Heart left ventricle (tissue), 16 donors: ENCODE measurements at regions of chr15 and their contacts with region 1.

Region 1: GRCh38 chr15:88498996-88499395 is 31.5 kb downstream of the MRPS11 start:
- DNase-seq: peak in 2 of 5 donors; percentile 34 to 57
- ATAC-seq: peak; percentile 47 to 79 (median 61)
- H3K4me3 ChIP-seq: no peak overlapping the region
- H3K27ac ChIP-seq: peak overlapping the region in 10 of 12 donors; percentile 3 to 83 (median 48)
- H3K4me1 ChIP-seq: peaks cover 0 to 39% (median 9%) of the 10 kb centered on the region in 12 donors
- H3K27me3 ChIP-seq: no peaks in the 10 kb centered on the region
- CTCF ChIP-seq: no peak
- POLR2A ChIP-seq: no peak

Region 2: DNA sequence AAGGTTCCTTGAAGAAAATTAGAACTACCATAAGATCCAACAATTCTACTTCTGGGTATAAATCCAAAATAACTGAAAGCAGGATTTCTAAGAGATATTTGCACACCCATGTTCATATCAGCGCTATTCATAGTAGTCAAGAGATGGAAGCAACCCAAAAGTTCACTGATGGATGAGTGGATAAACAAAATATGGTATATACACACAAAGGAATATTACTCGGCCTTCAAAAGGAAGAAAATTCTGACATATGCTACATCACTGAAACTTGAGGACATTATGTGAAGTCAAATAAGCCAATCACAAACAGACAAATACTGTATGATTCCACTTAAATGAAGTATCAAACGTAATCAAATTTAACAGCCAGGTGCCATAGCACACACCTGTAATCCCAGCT is 34.4 kb after region 1 on chr15:
- intact Hi-C with region 1: loop called in 1 of 10 experiments (anchors 5 kb)
- DNase-seq: no peak
- ATAC-seq: no peak
- H3K4me3 ChIP-seq: no peak overlapping the region
- H3K27ac ChIP-seq: no peak overlapping the region
- H3K4me1 ChIP-seq: peaks cover 0 to 19% (median 0%) of the 10 kb centered on the region in 12 donors
- H3K27me3 ChIP-seq: no peaks in the 10 kb centered on the region
- CTCF ChIP-seq: no peak
- POLR2A ChIP-seq: no peak

Region 3: DNA sequence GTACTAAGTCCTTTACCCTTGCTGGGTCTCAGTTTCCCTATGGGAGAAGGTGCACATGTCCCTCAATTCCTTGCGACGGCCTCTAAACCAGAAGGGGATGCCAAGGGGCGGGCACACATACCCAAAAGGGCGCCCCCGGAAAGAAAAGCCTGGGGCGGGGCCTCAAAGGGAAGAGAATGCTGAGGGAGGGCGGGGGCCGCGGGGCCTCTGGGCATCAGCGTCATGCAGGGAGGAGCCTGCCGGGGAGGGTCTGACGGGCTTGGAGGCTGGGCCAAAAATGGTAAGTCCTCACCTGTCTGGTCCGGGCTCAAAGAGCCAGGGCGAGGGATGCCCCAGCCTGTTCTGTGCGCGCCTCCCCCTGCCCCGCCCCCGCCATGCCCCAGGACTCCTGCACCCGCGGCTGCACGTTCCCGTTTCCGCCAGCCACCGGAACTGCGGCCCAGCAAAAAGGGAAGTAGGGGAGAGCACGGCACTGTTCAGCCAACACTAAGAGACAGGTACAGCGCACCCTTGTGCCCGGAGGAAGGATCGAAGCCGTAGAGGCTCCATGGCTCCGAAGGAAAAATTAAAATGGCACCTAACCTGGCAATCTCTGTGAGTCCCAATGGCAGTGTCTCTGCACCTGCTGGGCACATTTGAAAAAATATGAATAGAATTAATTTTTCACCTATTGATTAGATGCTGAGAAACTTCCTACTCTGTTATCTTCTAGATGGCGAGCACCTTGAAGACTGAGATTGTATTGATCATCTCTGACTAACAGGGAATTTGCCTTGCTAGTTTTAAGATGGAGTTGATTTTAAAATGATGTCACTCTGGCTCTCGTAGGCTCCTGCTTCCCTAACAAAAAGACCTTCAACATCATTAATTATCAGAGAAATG is 47.5 kb after region 1 on chr15 and contains the start of gene DET1:
- intact Hi-C with region 1: loop called in 1 of 10 experiments (anchors 2 kb)
- DNase-seq: peak; percentile 95 to 97 (median 96)
- ATAC-seq: peak; percentile 98 to 99 (median 99)
- H3K4me3 ChIP-seq: peak within 1 kb of the TSS; percentile 37 to 83 (median 78)
- H3K27ac ChIP-seq: peak within 1 kb of the TSS; percentile 82 to 97 (median 92)
- H3K4me1 ChIP-seq: peaks cover 0 to 46% (median 21%) of the 10 kb centered on the region in 12 donors
- H3K27me3 ChIP-seq: no peaks in the 10 kb centered on the region
- CTCF ChIP-seq: peak; percentile 64 to 91 (median 78)
- POLR2A ChIP-seq: peak in 1 of 2 donors; percentile 27
- total RNA-seq, gene DET1: 6.2 to 12.4 (median 8.7) TPM

Region 4: DNA sequence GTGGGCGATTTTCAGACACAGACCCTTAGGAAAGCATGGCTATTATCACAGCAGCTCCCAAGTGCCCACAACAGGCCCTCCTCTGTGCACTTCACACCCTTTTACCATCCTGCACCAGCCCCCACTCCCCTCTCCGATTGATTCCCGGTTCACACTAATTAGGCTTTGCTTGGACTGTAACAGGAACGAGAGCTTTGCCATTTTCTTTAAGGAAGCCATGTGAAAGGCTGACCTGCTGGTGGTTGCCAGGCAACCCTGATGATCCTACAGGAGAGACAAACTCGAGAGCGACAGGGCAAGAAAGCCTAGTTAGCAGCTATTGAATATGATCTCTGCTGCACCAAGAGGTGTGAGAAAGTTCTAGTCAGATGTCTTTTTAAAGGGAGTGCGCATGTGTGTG is 75.7 kb after region 1 on chr15:
- intact Hi-C with region 1: loop called in 2 of 10 experiments (anchors 1 to 5 kb)
- DNase-seq: no peak
- ATAC-seq: no peak
- H3K4me3 ChIP-seq: no peak overlapping the region
- H3K27ac ChIP-seq: peak overlapping the region in 4 of 12 donors; percentile 5 to 64 (median 14)
- H3K4me1 ChIP-seq: peaks cover 0 to 24% (median 7%) of the 10 kb centered on the region in 12 donors
- H3K27me3 ChIP-seq: no peaks in the 10 kb centered on the region
- CTCF ChIP-seq: no peak
- POLR2A ChIP-seq: no peak